ENCODE measurements at regions of chr2 and their contacts with region 1.

Region 1: GRCh38 chr2:162221064-162221463 is 22.2 kb downstream of the FAP start:
- DNase-seq: peak; percentile 66
- H3K4me3 Mint-ChIP-seq: no peak overlapping the region
- H3K27ac Mint-ChIP-seq: no peak overlapping the region
- H3K4me1 Mint-ChIP-seq: no peaks in the 10 kb centered on the region
- H3K27me3 Mint-ChIP-seq: peaks cover 21% of the 10 kb centered on the region

Region 2: DNA sequence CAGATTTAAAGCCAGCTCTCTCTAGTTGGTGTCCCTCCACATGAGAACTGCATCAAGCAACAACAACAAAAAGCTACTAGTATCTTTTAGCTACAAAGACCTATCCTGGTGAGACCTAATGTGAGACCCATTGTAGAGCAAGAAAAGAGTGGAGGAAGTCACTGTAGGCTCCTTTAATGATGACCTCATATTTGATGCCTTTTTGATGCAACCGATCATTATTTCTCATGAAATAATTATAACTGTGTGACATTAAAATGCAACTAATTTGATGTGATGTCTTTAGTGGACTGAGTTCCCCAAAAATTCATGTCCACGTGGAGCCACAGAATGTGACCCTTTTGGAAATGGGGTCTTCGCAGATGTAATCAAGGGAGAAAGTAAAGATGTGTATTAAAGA is 17.0 kb before region 1 on chr2:
- CTCF ChIA-PET with region 1: interaction called, 10 read pairs
- POLR2A ChIA-PET with region 1: no interaction called
- DNase-seq: no peak
- H3K4me3 Mint-ChIP-seq: no peak overlapping the region
- H3K27ac Mint-ChIP-seq: no peak overlapping the region
- H3K4me1 Mint-ChIP-seq: no peaks in the 10 kb centered on the region
- H3K27me3 Mint-ChIP-seq: peaks cover 9% of the 10 kb centered on the region

Region 3: DNA sequence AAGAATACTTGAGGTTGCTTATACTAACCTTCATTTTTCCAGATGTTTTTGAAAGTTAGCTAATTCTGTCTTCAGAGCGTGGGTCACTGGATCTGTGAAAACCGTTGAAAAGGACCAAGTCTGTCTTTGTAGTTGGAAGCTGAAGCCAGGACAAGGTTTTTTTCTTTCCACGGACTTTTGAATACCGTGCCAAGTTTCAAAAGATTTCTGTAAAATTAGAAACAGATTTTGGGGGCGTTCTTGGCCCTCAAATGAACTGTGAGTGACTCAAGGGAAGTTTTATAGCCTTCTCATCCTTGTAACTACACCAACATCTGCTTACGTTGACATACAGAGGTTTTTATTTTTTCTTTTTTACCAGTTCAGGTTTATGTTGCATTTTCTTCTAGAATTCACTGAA is 22.2 kb after region 1 on chr2 and contains the start of gene FAP:
- CTCF ChIA-PET with region 1: interaction called, 20 read pairs
- POLR2A ChIA-PET with region 1: no interaction called
- DNase-seq: no peak
- H3K4me3 Mint-ChIP-seq: no peak within 1 kb of the TSS
- H3K27ac Mint-ChIP-seq: no peak within 1 kb of the TSS
- H3K4me1 Mint-ChIP-seq: no peaks in the 10 kb centered on the region
- H3K27me3 Mint-ChIP-seq: peaks cover 30% of the 10 kb centered on the region
- total RNA-seq, gene FAP: not detected

Region 4: GRCh38 chr2:162301151-162301804 is 80.2 kb after region 1 on chr2:
- CTCF ChIA-PET with region 1: interaction called, 159 read pairs
- POLR2A ChIA-PET with region 1: interaction called, 4 read pairs
- DNase-seq: peak; percentile 62
- H3K4me3 Mint-ChIP-seq: no peak overlapping the region
- H3K27ac Mint-ChIP-seq: no peak overlapping the region
- H3K4me1 Mint-ChIP-seq: peaks cover 2% of the 10 kb centered on the region
- H3K27me3 Mint-ChIP-seq: no peaks in the 10 kb centered on the region

Measured in activated CD4-positive, alpha-beta memory T cell treated with anti-CD3 and anti-CD28 coated beads, Interleukin-2, amount 10 ng/mL, durations not matched to agents 7 days and 5 days (primary cell).